Esophagus muscularis mucosa (tissue), 4 donors: ENCODE measurements at regions of chr9 and their contacts with region 1.

Region 1: GRCh38 chr9:3299872-3300271 is 225.9 kb downstream of the RFX3 start:
- DNase-seq: no peak
- H3K4me3 ChIP-seq: no peak overlapping the region
- H3K27ac ChIP-seq: no peak overlapping the region
- H3K4me1 ChIP-seq: no peaks in the 10 kb centered on the region
- H3K27me3 ChIP-seq: no peaks in the 10 kb centered on the region
- CTCF ChIP-seq: no peak
- EP300 ChIP-seq: no peak
- POLR2A ChIP-seq: no peak

Region 2: DNA sequence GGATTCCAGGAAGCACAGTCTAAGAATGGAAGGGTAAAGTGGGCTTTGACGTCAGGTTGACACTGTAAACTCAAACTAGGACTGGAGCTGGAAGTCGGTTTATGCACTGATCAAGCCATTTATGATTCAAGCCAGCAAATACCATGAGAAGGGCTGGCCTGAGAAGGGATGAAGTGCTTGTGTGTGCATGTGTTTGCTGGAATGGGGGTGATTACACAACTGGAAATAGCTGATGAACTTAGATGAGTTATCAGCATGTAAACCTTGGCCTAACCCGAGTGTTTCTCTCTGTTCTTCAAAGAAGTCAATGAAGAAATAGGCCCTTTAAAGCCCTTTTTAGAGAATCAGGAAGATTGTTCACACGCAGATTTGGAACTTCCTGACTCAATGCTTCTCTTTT is 61.6 kb before region 1 on chr9:
- intact Hi-C with region 1: loop called (anchors 10 kb)
- DNase-seq: no peak
- H3K4me3 ChIP-seq: no peak overlapping the region
- H3K27ac ChIP-seq: no peak overlapping the region
- H3K4me1 ChIP-seq: peaks cover 0 to 7% (median 3%) of the 10 kb centered on the region in 4 donors
- H3K27me3 ChIP-seq: no peaks in the 10 kb centered on the region
- CTCF ChIP-seq: no peak
- EP300 ChIP-seq: no peak
- POLR2A ChIP-seq: no peak

Region 3: DNA sequence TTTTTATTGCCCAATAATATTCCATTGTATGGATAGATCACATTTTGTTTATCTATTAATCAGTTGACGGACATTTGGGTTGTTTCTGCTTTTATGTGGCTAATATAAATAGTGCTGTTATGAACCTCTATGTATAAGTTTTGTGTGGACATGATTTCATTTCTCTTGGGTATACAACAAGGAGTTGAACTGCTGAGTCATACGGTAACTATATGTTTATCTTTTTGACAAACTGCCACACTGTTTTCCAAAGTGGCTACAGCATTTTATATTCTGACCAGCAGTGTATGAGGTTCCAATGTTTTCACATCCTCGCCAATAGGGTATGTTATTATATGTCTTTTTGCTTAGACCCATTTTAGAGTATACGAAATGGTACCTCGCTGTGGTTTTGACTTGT is 38.4 kb before region 1 on chr9:
- intact Hi-C with region 1: no loop called
- DNase-seq: no peak
- H3K4me3 ChIP-seq: no peak overlapping the region
- H3K27ac ChIP-seq: no peak overlapping the region
- H3K4me1 ChIP-seq: no peaks in the 10 kb centered on the region
- H3K27me3 ChIP-seq: no peaks in the 10 kb centered on the region
- CTCF ChIP-seq: no peak
- EP300 ChIP-seq: no peak
- POLR2A ChIP-seq: no peak